ENCODE measurements at regions of chr12 and their contacts with region 1.

Region 1: GRCh38 chr12:124453419-124454351 is 113.7 kb downstream of the NCOR2 start:
- DNase-seq: peak; percentile 90 to 96 (median 92)
- ATAC-seq: peak; percentile 82 to 90 (median 82)
- H3K4me3 ChIP-seq: peak overlapping the region in 8 of 12 donors; percentile 2 to 38 (median 19)
- H3K27ac ChIP-seq: peak overlapping the region; percentile 37 to 94 (median 90)
- H3K4me1 ChIP-seq: peaks cover 19 to 82% (median 66%) of the 10 kb centered on the region in 12 donors
- H3K27me3 ChIP-seq: no peaks in the 10 kb centered on the region
- CTCF ChIP-seq: peak in 4 of 12 donors; percentile 2 to 31 (median 23)
- POLR2A ChIP-seq: no peak

Region 2: GRCh38 chr12:124484067-124484466 is 30.4 kb after region 1 on chr12:
- intact Hi-C with region 1: no loop called
- DNase-seq: peak in 2 of 5 donors; percentile 22 to 36
- ATAC-seq: no peak
- H3K4me3 ChIP-seq: no peak overlapping the region
- H3K27ac ChIP-seq: no peak overlapping the region
- H3K4me1 ChIP-seq: peaks cover 6 to 68% (median 44%) of the 10 kb centered on the region in 12 donors
- H3K27me3 ChIP-seq: no peaks in the 10 kb centered on the region
- CTCF ChIP-seq: no peak
- POLR2A ChIP-seq: no peak

Region 3: DNA sequence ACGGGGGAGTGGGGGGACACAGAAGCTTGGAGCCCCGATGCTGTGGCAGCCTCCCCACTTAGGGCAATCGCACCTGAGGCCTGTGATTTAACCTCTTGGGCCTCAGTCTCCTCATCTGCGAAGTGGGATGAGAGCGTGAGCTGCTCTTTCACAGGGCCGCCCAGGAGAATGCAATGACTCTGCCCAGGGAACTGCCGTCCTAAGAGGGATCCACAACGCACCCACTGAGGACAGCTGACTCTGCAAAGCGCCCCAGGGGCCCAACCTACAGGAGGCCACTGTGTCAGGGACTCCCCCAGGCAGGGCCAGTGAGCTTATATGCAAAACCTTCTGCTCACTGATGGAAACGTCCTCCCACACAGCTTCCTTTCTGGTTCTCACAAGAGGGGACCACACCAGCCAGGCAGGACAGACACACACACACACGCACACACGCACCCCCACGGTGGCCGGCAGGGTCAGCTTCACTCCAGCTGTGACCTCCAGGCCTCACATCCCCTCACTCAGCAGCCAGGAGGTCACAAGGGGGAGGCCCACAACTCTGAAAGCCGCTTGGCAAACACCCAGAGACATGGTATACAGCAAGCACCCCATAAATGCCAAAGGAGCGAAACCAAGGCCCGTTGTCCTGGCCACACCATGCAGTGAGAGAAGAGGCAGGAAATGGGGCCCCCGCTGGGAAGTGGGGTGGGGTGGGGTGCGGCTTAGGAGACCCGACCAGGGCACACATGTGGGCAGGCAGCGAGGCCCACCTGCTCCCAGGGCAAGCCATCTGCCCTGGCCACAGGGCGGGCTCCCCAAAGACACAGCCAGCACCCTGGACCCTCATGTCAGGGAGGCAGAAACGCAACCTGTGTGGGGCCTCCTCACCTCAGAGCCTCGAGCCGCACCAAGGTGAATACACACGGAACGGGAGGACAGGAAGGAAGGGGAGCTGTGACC is 40.4 kb after region 1 on chr12:
- intact Hi-C with region 1: loop called in 3 of 10 experiments (anchors 5 kb)
- DNase-seq: peak in 1 of 5 donors; percentile 47
- ATAC-seq: no peak
- H3K4me3 ChIP-seq: no peak overlapping the region
- H3K27ac ChIP-seq: no peak overlapping the region
- H3K4me1 ChIP-seq: peaks cover 31 to 91% (median 72%) of the 10 kb centered on the region in 12 donors
- H3K27me3 ChIP-seq: no peaks in the 10 kb centered on the region
- CTCF ChIP-seq: no peak
- POLR2A ChIP-seq: no peak

Region 4: GRCh38 chr12:124506145-124506831 is 52.6 kb after region 1 on chr12:
- intact Hi-C with region 1: loop called in 2 of 10 experiments (anchors 5 to 10 kb)
- DNase-seq: peak; percentile 85 to 92 (median 88)
- ATAC-seq: peak; percentile 13 to 78 (median 36)
- H3K4me3 ChIP-seq: peak overlapping the region in 7 of 12 donors; percentile 1 to 22 (median 14)
- H3K27ac ChIP-seq: peak overlapping the region; percentile 71 to 92 (median 80)
- H3K4me1 ChIP-seq: peaks cover 16 to 95% (median 74%) of the 10 kb centered on the region in 12 donors
- H3K27me3 ChIP-seq: no peaks in the 10 kb centered on the region
- CTCF ChIP-seq: no peak
- POLR2A ChIP-seq: no peak

Region 5: DNA sequence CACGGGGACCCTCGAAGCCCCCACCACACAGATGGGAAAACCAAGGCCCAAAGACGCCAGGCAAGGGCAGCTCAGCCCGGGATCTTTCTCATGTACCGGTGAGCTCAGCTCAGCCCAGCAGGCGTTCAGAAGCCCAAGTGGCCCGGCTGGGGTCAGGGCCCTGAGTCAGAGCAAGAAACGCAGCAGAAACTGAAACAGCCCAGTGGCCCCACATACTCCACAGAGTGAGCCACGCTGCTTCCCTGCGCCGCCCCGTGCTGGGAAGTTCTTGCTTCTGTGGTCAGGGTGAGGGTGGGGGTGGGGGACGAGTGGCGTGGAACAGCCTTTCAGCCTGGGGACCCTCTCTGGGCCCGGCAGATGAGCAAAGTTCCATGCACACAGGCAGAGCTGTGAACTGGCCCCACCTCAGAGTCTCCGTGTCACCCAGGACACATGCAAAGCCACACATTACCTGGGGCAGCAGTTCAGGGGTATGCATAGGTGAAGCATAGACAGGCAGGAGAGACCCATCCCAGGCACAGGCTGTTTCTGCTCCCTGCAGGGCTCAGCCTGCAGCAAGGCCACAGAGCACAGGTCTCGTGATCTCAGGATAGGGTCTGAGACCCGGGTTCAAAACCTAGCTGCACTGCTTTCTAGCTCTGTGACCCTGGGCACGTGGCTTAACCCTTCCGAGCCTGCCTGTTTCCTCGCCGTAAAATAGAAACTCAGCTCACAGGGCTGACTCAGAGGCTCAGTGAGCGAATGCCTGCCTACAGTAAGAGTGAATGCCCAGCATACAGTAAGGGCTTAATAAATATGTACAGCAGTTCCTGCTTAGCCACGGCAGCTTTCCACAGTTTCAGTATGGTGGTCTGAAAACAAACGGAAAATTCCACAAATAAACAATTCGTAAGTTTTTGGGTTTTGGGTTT is 92.1 kb after region 1 on chr12:
- intact Hi-C with region 1: no loop called
- DNase-seq: peak in 1 of 5 donors; percentile 34
- ATAC-seq: peak in 1 of 4 donors; percentile 18
- H3K4me3 ChIP-seq: no peak overlapping the region
- H3K27ac ChIP-seq: no peak overlapping the region
- H3K4me1 ChIP-seq: peaks cover 6 to 84% (median 68%) of the 10 kb centered on the region in 12 donors
- H3K27me3 ChIP-seq: no peaks in the 10 kb centered on the region
- CTCF ChIP-seq: no peak
- POLR2A ChIP-seq: no peak